Dendritic cell treated with granulocyte-macrophage colony-stimulating factor and Interleukin-4, amounts not matched to agents 40 ng/mL and 50 ng/mL, for 4 days (primary cell): ENCODE measurements at regions of chr4 and their contacts with region 1.

Region 1: GRCh38 chr4:80362578-80363181 is 27.1 kb downstream of the CFAP299 start:
- H3K4me3 Mint-ChIP-seq: no peak overlapping the region
- H3K27ac Mint-ChIP-seq: no peak overlapping the region
- H3K4me1 Mint-ChIP-seq: no peaks in the 10 kb centered on the region
- H3K27me3 Mint-ChIP-seq: peaks cover 9% of the 10 kb centered on the region

Region 2: GRCh38 chr4:80081581-80081980 is 281.1 kb before region 1 on chr4:
- intact Hi-C with region 1: no loop called
- H3K4me3 Mint-ChIP-seq: no peak overlapping the region
- H3K27ac Mint-ChIP-seq: peak overlapping the region; percentile 8
- H3K4me1 Mint-ChIP-seq: peaks cover 47% of the 10 kb centered on the region
- H3K27me3 Mint-ChIP-seq: peaks cover 2% of the 10 kb centered on the region

Region 3: GRCh38 chr4:80989921-80990544 is 627.4 kb after region 1 on chr4:
- intact Hi-C with region 1: loop called (anchors 1 kb)
- H3K4me3 Mint-ChIP-seq: no peak overlapping the region
- H3K27ac Mint-ChIP-seq: no peak overlapping the region
- H3K4me1 Mint-ChIP-seq: no peaks in the 10 kb centered on the region
- H3K27me3 Mint-ChIP-seq: no peaks in the 10 kb centered on the region

Region 4: GRCh38 chr4:81052119-81053068 is 689.7 kb after region 1 on chr4:
- intact Hi-C with region 1: loop called (anchors 5 kb)
- H3K4me3 Mint-ChIP-seq: no peak overlapping the region
- H3K27ac Mint-ChIP-seq: no peak overlapping the region
- H3K4me1 Mint-ChIP-seq: no peaks in the 10 kb centered on the region
- H3K27me3 Mint-ChIP-seq: no peaks in the 10 kb centered on the region

Region 5: GRCh38 chr4:81351654-81352445 is 989.2 kb after region 1 on chr4:
- intact Hi-C with region 1: loop called (anchors 5 kb)
- H3K4me3 Mint-ChIP-seq: no peak overlapping the region
- H3K27ac Mint-ChIP-seq: no peak overlapping the region
- H3K4me1 Mint-ChIP-seq: no peaks in the 10 kb centered on the region
- H3K27me3 Mint-ChIP-seq: no peaks in the 10 kb centered on the region